MCF 10A (cell line): ENCODE measurements at regions of chr6 and their contacts with region 1.

Region 1: DNA sequence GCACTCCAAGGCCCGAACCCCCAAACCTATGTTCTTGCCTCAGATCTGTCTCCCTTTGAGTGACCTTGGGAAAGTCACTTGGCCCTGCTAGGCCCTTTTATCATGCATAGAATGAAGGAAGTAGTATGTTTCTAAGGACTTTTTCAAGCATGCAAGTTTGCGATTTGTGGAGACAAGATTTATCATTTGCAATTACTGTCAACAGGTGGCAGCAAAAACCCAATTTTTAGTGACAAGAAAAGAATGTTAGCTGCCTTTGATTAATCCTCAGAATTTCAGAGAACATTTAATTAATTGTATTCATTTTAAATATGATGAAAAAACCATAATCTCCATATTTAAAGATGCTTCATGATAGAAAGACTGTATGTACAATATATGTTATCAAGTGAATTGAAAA is 28.3 kb upstream of the PREP start:
- DNase-seq: peak; percentile 70
- H3K4me3 Mint-ChIP-seq: no peak overlapping the region
- H3K27ac Mint-ChIP-seq: no peak overlapping the region
- H3K4me1 Mint-ChIP-seq: peaks cover 26% of the 10 kb centered on the region
- H3K27me3 Mint-ChIP-seq: no peaks in the 10 kb centered on the region
- CTCF ChIP-seq: peak; percentile 57

Region 2: DNA sequence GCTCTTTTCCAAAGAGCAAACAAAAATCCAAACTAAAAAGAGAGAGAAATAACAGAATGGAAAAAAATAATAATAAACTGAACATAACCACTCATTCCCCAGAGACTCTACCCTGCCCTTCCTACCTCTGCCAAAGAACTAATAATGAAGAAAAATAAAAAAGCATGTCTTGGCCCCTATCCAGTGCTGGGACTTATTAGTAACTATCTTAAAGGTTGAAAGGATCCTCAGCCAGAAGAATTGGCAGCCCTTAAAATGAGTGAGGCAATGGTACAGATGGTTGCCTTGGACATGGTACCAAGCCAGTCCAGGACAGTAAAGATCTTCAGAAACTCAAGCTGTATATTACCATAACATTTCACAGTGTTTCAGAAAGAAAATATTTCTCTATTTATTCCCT is 850.8 kb before region 1 on chr6:
- CTCF ChIA-PET with region 1: no interaction called
- POLR2A ChIA-PET with region 1: no interaction called
- intact Hi-C with region 1: no loop called
- DNase-seq: peak; percentile 21
- H3K4me3 Mint-ChIP-seq: no peak overlapping the region
- H3K27ac Mint-ChIP-seq: peak overlapping the region; percentile 50
- H3K4me1 Mint-ChIP-seq: peaks cover 14% of the 10 kb centered on the region
- H3K27me3 Mint-ChIP-seq: no peaks in the 10 kb centered on the region
- CTCF ChIP-seq: no peak

Region 3: GRCh38 chr6:105301072-105301503 is 130.1 kb before region 1 on chr6:
- CTCF ChIA-PET with region 1: no interaction called
- POLR2A ChIA-PET with region 1: no interaction called
- intact Hi-C with region 1: no loop called
- DNase-seq: no peak
- H3K4me3 Mint-ChIP-seq: no peak overlapping the region
- H3K27ac Mint-ChIP-seq: no peak overlapping the region
- H3K4me1 Mint-ChIP-seq: no peaks in the 10 kb centered on the region
- H3K27me3 Mint-ChIP-seq: no peaks in the 10 kb centered on the region
- CTCF ChIP-seq: no peak

Region 4: GRCh38 chr6:105445481-105445880 is 14.3 kb after region 1 on chr6:
- CTCF ChIA-PET with region 1: interaction called, 10 read pairs
- POLR2A ChIA-PET with region 1: interaction called, 3 read pairs
- intact Hi-C with region 1: no loop called
- DNase-seq: no peak
- H3K4me3 Mint-ChIP-seq: no peak overlapping the region
- H3K27ac Mint-ChIP-seq: no peak overlapping the region
- H3K4me1 Mint-ChIP-seq: no peaks in the 10 kb centered on the region
- H3K27me3 Mint-ChIP-seq: no peaks in the 10 kb centered on the region
- CTCF ChIP-seq: no peak

Region 5: DNA sequence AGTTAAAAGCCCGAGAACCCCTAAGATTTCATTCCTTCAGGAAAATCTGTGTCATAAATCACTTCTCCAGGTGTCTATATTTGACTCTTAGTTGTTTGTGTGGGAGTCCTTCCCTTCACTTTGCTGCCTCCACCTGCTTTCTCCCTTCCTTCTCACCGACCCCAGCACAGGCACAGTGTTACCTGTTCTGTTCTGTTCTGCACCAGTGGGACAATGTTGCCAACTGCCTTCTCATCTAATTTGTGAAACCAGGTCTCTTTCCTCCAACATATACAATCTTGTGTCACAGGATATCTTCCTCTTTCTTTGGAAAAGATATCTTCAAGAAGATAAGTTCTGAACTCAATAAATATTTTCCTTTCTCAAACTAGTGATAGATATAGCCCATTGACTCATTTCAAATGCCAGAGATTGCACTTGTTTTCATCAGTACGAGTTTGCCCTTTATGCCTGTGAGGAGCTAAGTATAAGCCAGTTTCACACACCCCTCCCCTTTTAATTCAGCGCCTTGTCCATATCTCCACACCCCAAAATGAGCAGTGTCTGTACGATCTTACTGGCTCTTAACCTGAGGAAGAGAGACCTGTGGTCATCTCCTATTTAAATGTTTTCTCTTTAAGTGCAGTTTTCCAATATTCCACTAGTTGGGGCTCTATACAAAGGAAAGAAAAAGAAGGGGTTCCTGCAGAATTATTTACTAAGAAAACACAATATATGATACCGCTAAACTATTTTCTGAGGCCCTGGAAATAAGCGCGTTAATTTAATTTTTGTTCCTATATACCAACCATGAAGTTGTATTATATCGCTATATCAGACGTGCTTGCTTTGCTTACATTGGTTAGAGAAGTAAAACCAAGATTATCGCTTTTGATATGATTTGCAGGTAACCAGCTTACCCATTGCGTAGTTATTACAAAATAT is 53.3 kb after region 1 on chr6:
- CTCF ChIA-PET with region 1: interaction called, 15 read pairs
- POLR2A ChIA-PET with region 1: interaction called, 3 read pairs
- intact Hi-C with region 1: loop called (anchors 1 kb)
- DNase-seq: peak; percentile 71
- H3K4me3 Mint-ChIP-seq: peak overlapping the region; percentile 3
- H3K27ac Mint-ChIP-seq: peak overlapping the region; percentile 83
- H3K4me1 Mint-ChIP-seq: peaks cover 36% of the 10 kb centered on the region
- H3K27me3 Mint-ChIP-seq: no peaks in the 10 kb centered on the region
- CTCF ChIP-seq: peak; percentile 80

Region 6: GRCh38 chr6:105733565-105734162 is 302.4 kb after region 1 on chr6:
- CTCF ChIA-PET with region 1: interaction called, 3 read pairs
- POLR2A ChIA-PET with region 1: no interaction called
- intact Hi-C with region 1: loop called (anchors 1 kb)
- DNase-seq: peak; percentile 51
- H3K4me3 Mint-ChIP-seq: no peak overlapping the region
- H3K27ac Mint-ChIP-seq: no peak overlapping the region
- H3K4me1 Mint-ChIP-seq: peaks cover 8% of the 10 kb centered on the region
- H3K27me3 Mint-ChIP-seq: no peaks in the 10 kb centered on the region
- CTCF ChIP-seq: peak; percentile 35

Region 7: DNA sequence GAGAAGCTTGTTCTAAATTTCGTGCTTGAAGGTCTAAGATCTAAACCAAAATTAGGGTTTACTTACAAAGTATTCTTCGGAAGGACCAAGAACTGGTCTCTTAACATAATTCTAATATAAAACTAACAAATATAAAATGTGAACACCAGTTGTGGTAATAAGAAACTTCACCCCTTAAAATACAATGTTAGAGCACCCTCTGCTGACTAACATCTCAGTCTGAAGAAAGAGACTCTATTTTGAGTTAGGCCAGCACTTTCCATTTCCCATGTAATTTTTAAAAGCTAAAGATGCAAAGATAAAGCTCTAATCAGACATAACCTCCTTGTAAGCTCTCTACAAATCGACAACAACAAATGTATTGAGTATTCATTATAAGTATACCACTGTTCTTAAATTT is 869.7 kb after region 1 on chr6:
- CTCF ChIA-PET with region 1: interaction called, 22 read pairs
- POLR2A ChIA-PET with region 1: interaction called, 3 read pairs
- intact Hi-C with region 1: loop called (anchors 2 kb)
- DNase-seq: peak; percentile 62
- H3K4me3 Mint-ChIP-seq: no peak overlapping the region
- H3K27ac Mint-ChIP-seq: no peak overlapping the region
- H3K4me1 Mint-ChIP-seq: no peaks in the 10 kb centered on the region
- H3K27me3 Mint-ChIP-seq: no peaks in the 10 kb centered on the region
- CTCF ChIP-seq: peak; percentile 50